ENCODE measurements at regions of chr15 and their contacts with region 1.

Region 1: GRCh38 chr15:40382580-40383456 is at the start of gene KNSTRN:
- DNase-seq: peak; percentile 87
- H3K4me3 Mint-ChIP-seq: peak within 1 kb of the TSS; percentile 96
- H3K27ac Mint-ChIP-seq: peak within 1 kb of the TSS; percentile 87
- H3K4me1 Mint-ChIP-seq: peaks cover 29% of the 10 kb centered on the region
- H3K27me3 Mint-ChIP-seq: peaks cover 7% of the 10 kb centered on the region
- total RNA-seq, gene KNSTRN: 48.4 and 52.1 TPM in 2 replicates

Region 2: GRCh38 chr15:40160689-40161688 is 221.8 kb before region 1 on chr15 and contains the start of gene BUB1B:
- intact Hi-C with region 1: loop called (anchors 2 kb)
- DNase-seq: peak; percentile 93
- H3K4me3 Mint-ChIP-seq: no peak within 1 kb of the TSS
- H3K27ac Mint-ChIP-seq: no peak within 1 kb of the TSS
- H3K4me1 Mint-ChIP-seq: peaks cover 10% of the 10 kb centered on the region
- H3K27me3 Mint-ChIP-seq: no peaks in the 10 kb centered on the region
- total RNA-seq, gene BUB1B: 71.0 and 76.1 TPM in 2 replicates

Region 3: DNA sequence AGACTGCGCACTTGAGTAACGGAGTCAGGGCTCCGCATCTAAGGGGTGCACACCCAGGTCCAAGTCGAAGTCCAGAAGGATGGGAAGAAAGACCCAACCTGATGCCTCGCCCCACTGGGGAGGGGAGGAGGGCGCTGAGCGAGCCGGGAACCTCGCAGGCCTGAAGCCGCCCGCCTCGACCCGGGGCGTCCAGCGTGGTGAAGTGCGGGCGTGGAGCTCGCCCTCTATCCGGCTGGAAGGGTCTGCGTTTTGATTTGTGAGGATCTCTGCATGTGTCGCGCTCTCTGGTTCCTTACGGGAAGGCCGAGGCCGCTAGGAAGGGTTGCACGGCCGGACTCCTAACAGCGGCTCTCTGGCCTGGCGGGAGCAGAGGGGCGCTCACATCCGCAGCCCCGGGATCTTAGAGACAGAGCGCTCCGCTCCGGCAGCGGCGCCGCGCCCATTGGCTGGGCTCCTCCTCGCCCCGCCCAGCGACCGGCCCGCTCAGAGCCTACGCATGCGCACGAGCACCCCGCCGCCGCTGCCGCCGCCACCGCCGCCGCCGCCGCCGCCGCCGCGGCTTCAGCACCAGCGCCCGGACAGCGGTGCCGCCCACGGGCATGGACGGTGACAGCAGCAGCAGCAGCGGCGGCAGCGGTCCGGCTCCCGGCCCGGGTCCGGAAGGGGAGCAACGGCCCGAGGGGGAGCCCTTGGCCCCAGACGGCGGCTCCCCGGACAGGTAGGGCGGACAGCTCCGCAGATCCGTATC is 24.9 kb before region 1 on chr15 and contains the start of gene DISP2:
- intact Hi-C with region 1: loop called (anchors 1 kb)
- DNase-seq: peak; percentile 82
- H3K4me3 Mint-ChIP-seq: peak within 1 kb of the TSS; percentile 80
- H3K27ac Mint-ChIP-seq: peak within 1 kb of the TSS; percentile 6
- H3K4me1 Mint-ChIP-seq: no peaks in the 10 kb centered on the region
- H3K27me3 Mint-ChIP-seq: peaks cover 29% of the 10 kb centered on the region
- total RNA-seq, gene DISP2: 0.02 and 0.54 TPM in 2 replicates

Region 4: GRCh38 chr15:40405501-40406381 is 22.9 kb after region 1 on chr15 and contains the start of gene IVD:
- intact Hi-C with region 1: loop called (anchors 1 kb)
- DNase-seq: peak; percentile 77
- H3K4me3 Mint-ChIP-seq: peak within 1 kb of the TSS; percentile 88
- H3K27ac Mint-ChIP-seq: peak within 1 kb of the TSS; percentile 87
- H3K4me1 Mint-ChIP-seq: peaks cover 37% of the 10 kb centered on the region
- H3K27me3 Mint-ChIP-seq: no peaks in the 10 kb centered on the region
- total RNA-seq, gene IVD: 59.6 and 65.2 TPM in 2 replicates

Region 5: GRCh38 chr15:40440743-40441564 is 58.1 kb after region 1 on chr15 and contains the start of gene BAHD1:
- intact Hi-C with region 1: loop called (anchors 2 kb)
- DNase-seq: peak; percentile 96
- H3K4me3 Mint-ChIP-seq: peak within 1 kb of the TSS; percentile 95
- H3K27ac Mint-ChIP-seq: peak within 1 kb of the TSS; percentile 87
- H3K4me1 Mint-ChIP-seq: peaks cover 26% of the 10 kb centered on the region
- H3K27me3 Mint-ChIP-seq: peaks cover 53% of the 10 kb centered on the region
- total RNA-seq, gene BAHD1: 26.5 and 26.9 TPM in 2 replicates